Astrocyte of the cerebellum (primary cell): ENCODE measurements at regions of chr5 and their contacts with region 1.

Region 1: DNA sequence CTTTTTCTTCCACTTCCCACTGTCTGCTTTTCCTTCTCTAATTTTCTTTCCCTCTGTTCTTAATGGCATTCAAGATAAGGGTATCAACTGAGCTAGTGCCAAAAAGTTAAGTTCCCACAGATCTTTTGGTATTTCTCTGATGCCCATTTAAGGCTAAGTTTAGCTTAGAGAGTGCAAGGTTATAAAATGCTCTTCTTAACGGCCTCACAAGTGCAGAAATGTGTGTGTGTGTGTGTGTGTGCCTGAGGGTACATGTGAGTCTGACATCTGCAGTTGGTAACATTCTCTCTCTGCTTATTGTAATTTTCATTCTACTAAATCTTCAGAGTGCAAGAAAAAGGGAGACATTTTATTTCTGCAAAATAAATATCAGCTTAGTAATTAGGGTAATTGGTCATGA is 24.2 kb downstream of the FBN2 start:
- DNase-seq: no peak
- H3K4me3 ChIP-seq: no peak overlapping the region
- CTCF ChIP-seq: no peak

Region 2: DNA sequence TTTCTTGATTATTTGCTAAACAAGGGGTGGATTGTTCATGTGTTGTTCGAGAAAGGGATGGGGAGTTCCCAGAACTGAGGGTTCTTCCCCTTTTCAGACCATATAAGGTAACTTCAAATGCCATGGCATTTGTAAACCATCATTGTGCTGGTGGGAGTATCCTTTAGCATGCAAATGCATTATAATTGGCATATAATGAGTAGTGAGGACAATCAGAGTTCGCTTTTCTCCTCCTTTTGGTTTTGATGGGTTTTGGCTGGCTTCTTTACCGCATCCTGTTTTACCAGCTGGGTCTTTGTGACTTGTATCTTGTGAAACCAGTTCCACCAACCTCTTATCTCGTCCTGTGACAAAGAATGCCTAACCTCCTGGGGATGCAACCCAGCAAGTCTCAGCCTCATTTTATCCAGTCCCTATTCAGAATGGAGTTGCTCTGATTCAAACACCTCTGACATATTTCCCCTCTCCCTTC is 32.9 kb after region 1 on chr5:
- in situ Hi-C with region 1: no loop called
- DNase-seq: no peak
- H3K4me3 ChIP-seq: no peak overlapping the region
- CTCF ChIP-seq: no peak

Region 3: GRCh38 chr5:128596071-128596470 is 82.3 kb after region 1 on chr5:
- in situ Hi-C with region 1: no loop called
- DNase-seq: peak; percentile 13
- H3K4me3 ChIP-seq: no peak overlapping the region
- CTCF ChIP-seq: no peak

Region 4: DNA sequence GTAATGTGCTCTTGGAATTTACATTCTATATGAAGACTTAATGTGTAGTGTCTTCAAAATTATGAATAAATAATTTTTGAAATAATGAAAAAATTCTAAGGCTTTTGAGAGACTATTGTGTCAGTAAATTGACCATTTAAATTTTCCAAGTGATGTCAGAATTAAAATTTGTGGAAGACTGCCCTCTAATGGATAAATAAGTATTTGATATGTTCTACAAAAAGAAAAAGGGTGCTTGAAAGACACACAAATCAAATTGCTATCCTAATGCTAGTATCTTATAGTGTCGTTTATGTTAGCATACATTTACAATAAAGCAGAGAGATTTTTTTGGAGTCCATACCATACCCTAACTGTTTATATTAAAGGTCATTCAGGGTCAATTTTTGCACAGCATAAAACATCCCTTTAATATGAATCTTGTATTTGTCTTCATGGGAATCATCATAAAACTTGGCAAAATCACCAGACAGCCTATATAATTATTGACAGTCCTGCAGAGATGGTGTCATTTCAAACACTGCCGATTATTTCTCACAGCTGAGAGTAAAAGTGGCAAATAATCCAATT is 330.6 kb after region 1 on chr5:
- in situ Hi-C with region 1: loop called (anchors 25 kb)
- DNase-seq: peak; percentile 26
- H3K4me3 ChIP-seq: no peak overlapping the region
- CTCF ChIP-seq: no peak